Posterior vena cava (tissue), 2 donors: ENCODE measurements at regions of chr12 and their contacts with region 1.

Region 1: GRCh38 chr12:2864198-2864597 is 7.4 kb upstream of the TEX52 start:
- DNase-seq: peak; percentile 52

Region 2: GRCh38 chr12:2823483-2823882 is 40.7 kb before region 1 on chr12:
- intact Hi-C with region 1: loop called in 1 of 2 experiments (anchors 2 kb)
- DNase-seq: no peak

Region 3: GRCh38 chr12:2877953-2878732 is 13.9 kb after region 1 on chr12:
- intact Hi-C with region 1: loop called in 1 of 2 experiments (anchors 1 kb)
- DNase-seq: peak; percentile 35